T-cell (primary cell): ENCODE measurements at regions of chr3 and their contacts with region 1.

Region 1: DNA sequence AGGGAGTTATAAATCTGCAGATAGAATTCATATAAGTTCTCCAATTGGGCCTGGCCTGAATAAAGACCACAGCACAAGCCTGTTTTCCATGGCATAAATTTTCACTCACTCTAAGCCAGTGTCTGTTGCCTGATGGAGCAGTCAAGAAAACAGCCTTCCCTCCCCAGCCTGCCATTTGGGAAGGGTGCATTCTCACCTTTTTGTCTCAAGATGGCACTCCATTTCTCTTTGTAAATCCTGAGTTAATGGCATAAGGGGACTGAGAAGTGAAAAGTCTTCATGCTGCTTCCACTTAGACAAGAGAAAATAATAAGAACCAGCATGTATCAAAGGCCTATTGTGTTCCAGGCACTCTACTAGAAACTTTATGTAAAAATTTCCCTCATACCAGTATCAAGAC is 115.6 kb upstream of the MANF start:
- DNase-seq: no peak
- ATAC-seq: no peak
- H3K4me3 ChIP-seq: no peak overlapping the region
- H3K4me3 Mint-ChIP-seq: no peak overlapping the region
- H3K27ac ChIP-seq: no peak overlapping the region
- H3K27ac Mint-ChIP-seq: peak overlapping the region; percentile 9 to 98
- H3K4me1 ChIP-seq: peaks cover 23 to 34% of the 10 kb centered on the region in 2 experiments
- H3K4me1 Mint-ChIP-seq: peaks cover 39 to 46% (median 43%) of the 10 kb centered on the region in 3 donors
- H3K27me3 ChIP-seq: no peaks in the 10 kb centered on the region
- H3K27me3 Mint-ChIP-seq: no peaks in the 10 kb centered on the region

Region 2: GRCh38 chr3:51282931-51283330 is 13.5 kb after region 1 on chr3:
- CTCF ChIA-PET with region 1: no interaction called
- POLR2A ChIA-PET with region 1: interaction called in 1 of 2 experiments, 12 read pairs
- DNase-seq: no peak
- ATAC-seq: no peak
- H3K4me3 ChIP-seq: no peak overlapping the region
- H3K4me3 Mint-ChIP-seq: no peak overlapping the region
- H3K27ac ChIP-seq: no peak overlapping the region
- H3K27ac Mint-ChIP-seq: no peak overlapping the region
- H3K4me1 ChIP-seq: no peaks in the 10 kb centered on the region
- H3K4me1 Mint-ChIP-seq: no peaks in the 10 kb centered on the region
- H3K27me3 ChIP-seq: no peaks in the 10 kb centered on the region
- H3K27me3 Mint-ChIP-seq: peaks cover 0 to 5% of the 10 kb centered on the region in 2 donors

Region 3: GRCh38 chr3:51511000-51511399 is 241.5 kb after region 1 on chr3:
- CTCF ChIA-PET with region 1: no interaction called
- POLR2A ChIA-PET with region 1: no interaction called
- DNase-seq: no peak
- ATAC-seq: no peak
- H3K4me3 ChIP-seq: no peak overlapping the region
- H3K4me3 Mint-ChIP-seq: no peak overlapping the region
- H3K27ac ChIP-seq: no peak overlapping the region
- H3K27ac Mint-ChIP-seq: no peak overlapping the region
- H3K4me1 ChIP-seq: peaks cover 0 to 5% of the 10 kb centered on the region in 2 experiments
- H3K4me1 Mint-ChIP-seq: peaks cover 0 to 15% (median 8%) of the 10 kb centered on the region in 3 donors
- H3K27me3 ChIP-seq: no peaks in the 10 kb centered on the region
- H3K27me3 Mint-ChIP-seq: no peaks in the 10 kb centered on the region